ENCODE measurements at regions of chr2 and their contacts with region 1.

Region 1: DNA sequence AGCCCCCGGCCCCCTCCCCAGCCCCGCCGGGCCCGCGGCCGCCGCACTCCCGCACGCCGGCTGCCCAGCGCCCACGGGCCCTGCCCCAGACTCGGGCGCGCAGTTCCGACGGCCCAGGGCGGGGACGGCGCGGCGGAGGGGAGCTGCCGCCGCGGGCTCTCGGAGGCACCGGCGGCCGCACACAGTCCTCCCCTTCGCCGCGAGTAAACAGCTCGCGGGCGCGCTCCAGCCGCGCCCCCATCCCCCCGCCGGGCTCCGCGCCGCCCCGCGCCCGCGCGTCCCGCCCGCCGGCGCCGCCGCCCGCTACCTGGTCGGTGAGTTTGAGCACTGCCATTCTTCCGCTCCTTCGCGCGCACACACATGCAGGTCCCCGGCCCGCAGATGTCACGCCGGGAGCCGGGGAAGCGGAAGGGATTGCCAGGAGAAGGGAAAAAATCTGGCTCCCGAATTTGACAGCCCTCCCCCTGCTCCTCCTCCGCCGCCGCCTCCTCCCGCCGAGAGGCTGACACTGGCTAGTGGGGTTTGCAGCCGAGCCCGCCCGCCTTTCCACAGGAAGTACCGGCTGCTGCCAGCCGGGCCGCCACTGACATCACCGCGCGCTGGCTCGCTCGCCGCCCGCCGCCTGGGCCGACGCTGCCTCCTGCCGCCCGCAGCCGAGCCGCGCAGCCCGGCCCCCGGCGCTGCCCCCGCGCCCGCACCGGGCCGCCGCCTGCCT is at the start of gene ANKRD44:
- DNase-seq: peak; percentile 88
- CTCF ChIP-seq: peak; percentile 77

Region 2: GRCh38 chr2:197138506-197138905 is 171.9 kb before region 1 on chr2:
- CTCF ChIA-PET with region 1: no interaction called
- POLR2A ChIA-PET with region 1: no interaction called
- DNase-seq: no peak
- CTCF ChIP-seq: no peak

Region 3: GRCh38 chr2:197159661-197160211 is 150.7 kb before region 1 on chr2:
- CTCF ChIA-PET with region 1: interaction called, 12 read pairs
- POLR2A ChIA-PET with region 1: interaction called, 3 read pairs
- DNase-seq: no peak
- CTCF ChIP-seq: no peak

Region 4: DNA sequence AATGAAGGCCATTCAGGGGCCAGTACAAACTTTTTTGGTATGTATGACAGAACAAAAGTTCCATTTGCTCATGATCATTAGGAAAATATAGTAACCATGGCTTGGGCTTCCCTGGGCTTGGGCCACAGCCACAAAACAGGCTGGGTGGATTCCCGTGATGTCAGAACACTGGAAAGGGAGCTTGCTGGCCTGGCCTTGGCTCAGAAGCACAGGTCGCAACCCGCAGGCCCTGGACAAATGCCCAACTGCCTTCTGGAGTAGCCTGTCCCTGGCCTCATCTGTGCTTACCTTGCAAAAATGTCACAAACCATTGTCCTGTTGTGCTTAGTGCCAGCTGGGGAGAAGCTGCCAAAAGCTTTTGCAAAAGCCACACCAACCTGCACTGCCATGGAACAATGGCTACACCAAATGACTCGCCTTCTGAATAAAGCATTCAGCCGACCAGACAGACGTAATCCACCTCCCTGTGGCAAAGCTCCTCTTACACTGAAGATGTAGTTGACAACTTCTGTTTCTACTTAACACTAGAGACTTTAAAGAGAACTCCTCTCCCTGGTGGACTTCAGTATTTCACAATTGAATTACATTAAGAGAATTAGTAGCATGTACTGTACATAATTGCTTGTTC is 125.4 kb before region 1 on chr2:
- CTCF ChIA-PET with region 1: interaction called, 32 read pairs
- POLR2A ChIA-PET with region 1: no interaction called
- DNase-seq: no peak
- CTCF ChIP-seq: no peak

Region 5: GRCh38 chr2:197293252-197294007 is 17.0 kb before region 1 on chr2:
- CTCF ChIA-PET with region 1: interaction called, 11 read pairs
- POLR2A ChIA-PET with region 1: interaction called, 6 read pairs
- DNase-seq: no peak
- CTCF ChIP-seq: no peak

Region 6: GRCh38 chr2:197322724-197323720 is 12.6 kb after region 1 on chr2:
- CTCF ChIA-PET with region 1: interaction called, 10 read pairs
- POLR2A ChIA-PET with region 1: no interaction called
- DNase-seq: no peak
- CTCF ChIP-seq: no peak